ENCODE measurements at regions of chr11 and their contacts with region 1.

Region 1: GRCh38 chr11:70892889-70893288 is 359.5 kb downstream of the SHANK2 start:
- DNase-seq: no peak
- ATAC-seq: no peak
- H3K4me3 Mint-ChIP-seq: no peak overlapping the region
- H3K27ac Mint-ChIP-seq: no peak overlapping the region
- H3K4me1 Mint-ChIP-seq: no peaks in the 10 kb centered on the region
- H3K27me3 Mint-ChIP-seq: no peaks in the 10 kb centered on the region

Region 2: DNA sequence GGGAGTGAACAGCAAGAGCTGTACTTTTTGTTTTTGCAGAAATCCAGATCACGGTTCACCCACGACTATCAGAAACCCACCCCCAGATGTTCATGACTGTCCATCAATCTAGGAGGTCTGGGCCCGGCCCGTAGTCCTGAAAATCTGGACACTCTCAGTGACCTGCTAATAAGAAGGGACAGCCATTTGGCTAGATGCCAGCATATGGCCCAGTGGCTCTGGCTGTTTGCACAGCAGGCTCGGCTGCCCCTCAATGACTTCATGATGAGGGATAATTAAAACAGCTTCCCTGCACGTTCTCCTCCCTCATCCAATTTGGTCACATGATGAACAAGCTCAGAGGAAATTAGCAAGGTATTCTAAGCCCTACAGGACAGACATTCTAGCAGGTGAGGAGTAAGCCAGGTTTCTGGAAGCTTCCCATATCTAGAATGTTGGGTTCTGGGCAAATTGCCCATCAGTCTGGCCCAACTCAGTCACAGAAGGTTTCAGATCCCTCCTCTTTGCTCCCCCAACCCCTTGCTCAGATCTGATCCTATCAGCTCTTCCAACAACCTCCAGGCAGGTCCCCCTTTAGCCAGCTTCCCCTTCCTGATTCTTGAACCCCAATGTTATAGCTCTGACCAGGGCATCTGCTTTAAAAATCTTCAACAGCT is 37.9 kb before region 1 on chr11:
- CTCF ChIA-PET with region 1: no interaction called
- POLR2A ChIA-PET with region 1: no interaction called
- intact Hi-C with region 1: no loop called
- DNase-seq: no peak
- ATAC-seq: no peak
- H3K4me3 Mint-ChIP-seq: no peak overlapping the region
- H3K27ac Mint-ChIP-seq: no peak overlapping the region
- H3K4me1 Mint-ChIP-seq: no peaks in the 10 kb centered on the region
- H3K27me3 Mint-ChIP-seq: peaks cover 13% of the 10 kb centered on the region

Region 3: DNA sequence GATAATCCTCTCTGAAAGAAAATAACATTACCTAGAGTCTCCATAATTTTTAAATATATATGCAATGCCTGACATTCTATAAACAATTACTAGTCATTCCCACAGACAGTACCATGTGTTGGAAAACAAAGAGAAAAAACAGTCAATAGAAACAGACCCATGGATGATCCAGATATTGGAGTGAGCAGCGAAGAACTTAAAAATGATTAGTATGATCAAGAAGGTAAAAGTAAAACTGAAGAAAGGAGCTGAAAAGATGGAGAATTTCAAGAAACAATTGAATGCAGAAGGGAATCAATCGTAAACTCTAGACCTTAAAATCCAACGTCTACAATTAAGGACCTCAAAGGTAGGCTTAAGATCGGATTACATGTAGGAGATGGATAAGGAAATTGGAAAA is 28.9 kb after region 1 on chr11:
- CTCF ChIA-PET with region 1: no interaction called
- POLR2A ChIA-PET with region 1: no interaction called
- intact Hi-C with region 1: loop called in 1 of 2 experiments (anchors 1 kb)
- DNase-seq: no peak
- ATAC-seq: no peak
- H3K4me3 Mint-ChIP-seq: no peak overlapping the region
- H3K27ac Mint-ChIP-seq: no peak overlapping the region
- H3K4me1 Mint-ChIP-seq: no peaks in the 10 kb centered on the region
- H3K27me3 Mint-ChIP-seq: peaks cover 2% of the 10 kb centered on the region

Region 4: GRCh38 chr11:71066325-71066724 is 173.4 kb after region 1 on chr11:
- CTCF ChIA-PET with region 1: no interaction called
- POLR2A ChIA-PET with region 1: no interaction called
- intact Hi-C with region 1: no loop called
- DNase-seq: no peak
- ATAC-seq: no peak
- H3K4me3 Mint-ChIP-seq: no peak overlapping the region
- H3K27ac Mint-ChIP-seq: no peak overlapping the region
- H3K4me1 Mint-ChIP-seq: no peaks in the 10 kb centered on the region
- H3K27me3 Mint-ChIP-seq: peaks cover 24% of the 10 kb centered on the region

Measured in activated CD4-positive, alpha-beta T cell treated with anti-CD3 and anti-CD28 coated beads for 36 hours (primary cell).